SK-N-SH (cell line): ENCODE measurements at regions of chr12 and their contacts with region 1.

Region 1: GRCh38 chr12:100741084-100741711 is 53.4 kb upstream of the ANO4 start:
- DNase-seq: peak; percentile 37
- H3K4me3 ChIP-seq: no peak overlapping the region
- H3K27ac ChIP-seq: no peak overlapping the region
- H3K4me1 ChIP-seq: no peaks in the 10 kb centered on the region
- H3K27me3 ChIP-seq: no peaks in the 10 kb centered on the region
- CTCF ChIP-seq: peak; percentile 87
- EP300 ChIP-seq: no peak
- RAD21 ChIP-seq: peak; percentile 80

Region 2: GRCh38 chr12:100672075-100672592 is 69.1 kb before region 1 on chr12:
- CTCF ChIA-PET with region 1: interaction called, 20 read pairs
- POLR2A ChIA-PET with region 1: no interaction called
- DNase-seq: peak; percentile 30
- H3K4me3 ChIP-seq: no peak overlapping the region; a peak in 1 of 4 replicates
- H3K27ac ChIP-seq: no peak overlapping the region
- H3K4me1 ChIP-seq: peaks cover 0 to 2% of the 10 kb centered on the region in 2 experiments; a peak in 1 of 4 replicates
- H3K27me3 ChIP-seq: no peaks in the 10 kb centered on the region
- CTCF ChIP-seq: peak; percentile 54
- EP300 ChIP-seq: no peak
- RAD21 ChIP-seq: no peak; the same call in 1 of the 2 replicates

Region 3: DNA sequence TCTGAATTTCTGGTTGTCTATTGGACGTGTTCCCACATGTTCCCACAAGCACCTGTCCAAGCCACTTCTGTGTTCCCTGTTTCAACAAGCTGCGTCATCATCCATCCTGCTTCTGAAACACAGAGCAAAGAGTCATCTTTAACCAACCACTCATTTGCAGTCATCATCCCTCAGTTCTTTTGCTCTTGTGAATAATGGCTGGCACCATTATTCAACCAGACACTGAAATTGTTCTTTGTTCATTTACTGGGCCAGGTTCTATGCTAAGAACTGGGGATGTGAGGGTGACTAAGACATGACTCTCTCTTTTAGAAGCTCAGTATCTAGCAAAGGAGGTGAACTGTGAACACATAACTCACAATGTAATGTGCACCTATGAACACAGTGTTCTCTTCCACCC is 12.6 kb after region 1 on chr12:
- CTCF ChIA-PET with region 1: interaction called, 13 read pairs
- POLR2A ChIA-PET with region 1: no interaction called
- DNase-seq: no peak
- H3K4me3 ChIP-seq: no peak overlapping the region
- H3K27ac ChIP-seq: no peak overlapping the region
- H3K4me1 ChIP-seq: no peaks in the 10 kb centered on the region
- H3K27me3 ChIP-seq: no peaks in the 10 kb centered on the region
- CTCF ChIP-seq: no peak
- EP300 ChIP-seq: no peak
- RAD21 ChIP-seq: no peak